Caco-2 (cell line): ENCODE measurements at regions of chr19 and their contacts with region 1.

Region 1: GRCh38 chr19:14536926-14537692 is 7.7 kb downstream of the TECR start:
- DNase-seq: peak; percentile 89 to 96
- H3K4me3 ChIP-seq: no peak overlapping the region
- H3K4me3 Mint-ChIP-seq: peak overlapping the region; percentile 64
- H3K27ac Mint-ChIP-seq: peak overlapping the region; percentile 70
- H3K4me1 ChIP-seq: peaks cover 10% of the 10 kb centered on the region
- H3K4me1 Mint-ChIP-seq: no peaks in the 10 kb centered on the region
- H3K27me3 ChIP-seq: no peaks in the 10 kb centered on the region
- H3K27me3 Mint-ChIP-seq: no peaks in the 10 kb centered on the region
- CTCF ChIP-seq: no peak

Region 2: DNA sequence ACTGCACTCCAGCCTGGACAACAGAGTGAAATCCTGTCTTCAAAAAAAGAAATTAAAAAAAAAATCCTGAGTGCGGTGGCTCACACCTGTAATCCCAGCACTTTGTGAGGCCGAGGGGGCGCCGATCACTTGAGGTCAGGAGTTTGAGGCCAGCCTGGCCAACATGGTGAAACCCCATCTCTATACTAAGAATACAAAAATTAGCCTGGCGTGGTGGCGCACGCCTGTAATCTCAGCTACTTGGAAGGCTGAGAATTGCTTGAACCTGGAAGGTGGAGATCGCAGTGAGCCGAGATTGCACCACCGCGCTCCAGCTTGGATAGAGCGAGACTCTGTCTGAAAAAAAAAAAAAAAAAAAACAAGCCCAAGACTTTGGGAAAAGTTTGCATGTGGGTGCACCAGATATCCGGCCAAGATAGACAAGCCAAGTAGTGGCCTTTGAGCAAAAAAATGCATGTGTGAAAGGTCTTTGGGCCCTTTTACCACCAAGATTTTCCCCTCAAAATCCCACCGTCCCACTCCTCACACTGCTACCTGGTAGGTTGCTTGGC is 24.6 kb before region 1 on chr19:
- CTCF ChIA-PET with region 1: interaction called, 11 read pairs
- POLR2A ChIA-PET with region 1: interaction called, 11 read pairs
- intact Hi-C with region 1: no loop called
- DNase-seq: no peak
- H3K4me3 ChIP-seq: no peak overlapping the region
- H3K4me3 Mint-ChIP-seq: no peak overlapping the region
- H3K27ac Mint-ChIP-seq: no peak overlapping the region
- H3K4me1 ChIP-seq: peaks cover 32% of the 10 kb centered on the region
- H3K4me1 Mint-ChIP-seq: peaks cover 16% of the 10 kb centered on the region
- H3K27me3 ChIP-seq: no peaks in the 10 kb centered on the region
- H3K27me3 Mint-ChIP-seq: no peaks in the 10 kb centered on the region
- CTCF ChIP-seq: no peak

Region 3: DNA sequence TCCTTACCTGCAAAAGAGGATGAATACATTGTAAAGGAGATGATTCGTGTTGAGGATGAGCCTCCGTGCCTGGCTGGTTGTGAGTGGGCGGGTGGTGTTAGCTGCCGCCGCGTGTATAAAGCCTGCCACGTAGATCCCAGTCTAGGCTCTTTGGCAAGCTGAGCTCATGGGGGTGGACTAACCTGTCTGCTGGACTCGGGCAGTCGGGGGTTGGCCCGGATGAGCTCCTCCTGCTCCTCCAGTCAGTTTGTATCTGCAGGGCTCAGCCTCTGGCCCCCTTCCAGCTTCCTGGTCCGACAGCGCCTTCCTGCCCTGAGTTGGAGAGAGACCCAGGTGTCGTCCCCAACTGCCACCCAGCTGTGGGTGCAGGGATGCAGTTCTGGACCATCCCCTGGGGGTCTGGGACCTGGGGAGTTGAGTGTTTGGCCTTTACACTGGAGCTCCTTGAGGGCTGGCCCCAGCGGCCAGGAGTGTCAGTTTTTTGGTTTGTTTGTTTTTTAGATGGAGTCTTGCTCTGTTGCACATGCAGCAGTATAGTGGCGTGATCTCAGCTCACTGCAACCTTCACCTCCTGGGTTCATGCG is 13.2 kb after region 1 on chr19:
- CTCF ChIA-PET with region 1: interaction called, 4 read pairs
- POLR2A ChIA-PET with region 1: no interaction called
- intact Hi-C with region 1: loop called (anchors 2 kb)
- DNase-seq: no peak
- H3K4me3 ChIP-seq: no peak overlapping the region
- H3K4me3 Mint-ChIP-seq: no peak overlapping the region
- H3K27ac Mint-ChIP-seq: peak overlapping the region; percentile 20
- H3K4me1 ChIP-seq: peaks cover 14% of the 10 kb centered on the region
- H3K4me1 Mint-ChIP-seq: peaks cover 13% of the 10 kb centered on the region
- H3K27me3 ChIP-seq: no peaks in the 10 kb centered on the region
- H3K27me3 Mint-ChIP-seq: no peaks in the 10 kb centered on the region
- CTCF ChIP-seq: no peak

Region 4: GRCh38 chr19:14619404-14619803 is 82.3 kb after region 1 on chr19:
- CTCF ChIA-PET with region 1: no interaction called
- POLR2A ChIA-PET with region 1: no interaction called
- intact Hi-C with region 1: no loop called
- DNase-seq: no peak
- H3K4me3 ChIP-seq: no peak overlapping the region
- H3K4me3 Mint-ChIP-seq: no peak overlapping the region
- H3K27ac Mint-ChIP-seq: no peak overlapping the region
- H3K4me1 ChIP-seq: no peaks in the 10 kb centered on the region
- H3K4me1 Mint-ChIP-seq: no peaks in the 10 kb centered on the region
- H3K27me3 ChIP-seq: no peaks in the 10 kb centered on the region
- H3K27me3 Mint-ChIP-seq: no peaks in the 10 kb centered on the region
- CTCF ChIP-seq: no peak

Region 5: DNA sequence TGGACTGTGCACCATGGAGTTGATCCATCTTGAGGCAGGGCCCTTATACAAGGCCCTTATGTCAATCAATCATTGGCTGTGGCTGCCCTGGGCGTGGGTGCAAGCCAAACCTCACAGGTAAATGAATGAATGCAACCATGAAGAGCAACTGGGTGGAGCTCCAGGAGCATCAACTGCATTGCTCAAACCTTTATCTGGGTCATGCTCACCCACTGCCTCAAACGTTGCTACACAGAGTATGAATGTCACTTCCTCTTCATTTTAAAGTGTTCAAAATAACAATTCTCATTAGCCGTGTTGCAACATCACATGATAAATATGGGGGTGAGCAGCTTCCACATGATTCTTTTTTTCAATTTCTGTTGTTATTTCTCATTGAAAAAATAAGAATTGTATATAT is 146.3 kb after region 1 on chr19:
- CTCF ChIA-PET with region 1: no interaction called
- POLR2A ChIA-PET with region 1: no interaction called
- intact Hi-C with region 1: no loop called
- DNase-seq: no peak
- H3K4me3 ChIP-seq: no peak overlapping the region
- H3K4me3 Mint-ChIP-seq: no peak overlapping the region
- H3K27ac Mint-ChIP-seq: no peak overlapping the region
- H3K4me1 ChIP-seq: no peaks in the 10 kb centered on the region
- H3K4me1 Mint-ChIP-seq: no peaks in the 10 kb centered on the region
- H3K27me3 ChIP-seq: no peaks in the 10 kb centered on the region
- H3K27me3 Mint-ChIP-seq: peaks cover 11% of the 10 kb centered on the region
- CTCF ChIP-seq: no peak

Region 6: GRCh38 chr19:14699641-14700040 is 162.5 kb after region 1 on chr19:
- CTCF ChIA-PET with region 1: no interaction called
- POLR2A ChIA-PET with region 1: no interaction called
- intact Hi-C with region 1: no loop called
- DNase-seq: no peak
- H3K4me3 ChIP-seq: no peak overlapping the region
- H3K4me3 Mint-ChIP-seq: no peak overlapping the region
- H3K27ac Mint-ChIP-seq: no peak overlapping the region
- H3K4me1 ChIP-seq: no peaks in the 10 kb centered on the region
- H3K4me1 Mint-ChIP-seq: no peaks in the 10 kb centered on the region
- H3K27me3 ChIP-seq: no peaks in the 10 kb centered on the region
- H3K27me3 Mint-ChIP-seq: no peaks in the 10 kb centered on the region
- CTCF ChIP-seq: no peak